Common myeloid progenitor, CD34-positive (primary cell): ENCODE measurements at regions of chr12 and their contacts with region 1.

Region 1: GRCh38 chr12:162467-163307 is 51.3 kb downstream of the SLC6A12 start:
- DNase-seq: no peak
- H3K4me3 ChIP-seq: no peak overlapping the region
- H3K27ac ChIP-seq: no peak overlapping the region
- H3K4me1 ChIP-seq: peaks cover 0 to 34% (median under 1%) of the 10 kb centered on the region in 4 experiments
- H3K27me3 ChIP-seq: no peaks in the 10 kb centered on the region

Region 2: GRCh38 chr12:176321-177181 is 13.9 kb after region 1 on chr12:
- CTCF ChIA-PET with region 1: interaction called, 15 read pairs
- POLR2A ChIA-PET with region 1: no interaction called
- DNase-seq: no peak
- H3K4me3 ChIP-seq: no peak overlapping the region
- H3K27ac ChIP-seq: no peak overlapping the region
- H3K4me1 ChIP-seq: peaks cover 4 to 72% (median 48%) of the 10 kb centered on the region in 4 experiments
- H3K27me3 ChIP-seq: no peaks in the 10 kb centered on the region